ENCODE measurements at regions of chr4 and their contacts with region 1.

Region 1: DNA sequence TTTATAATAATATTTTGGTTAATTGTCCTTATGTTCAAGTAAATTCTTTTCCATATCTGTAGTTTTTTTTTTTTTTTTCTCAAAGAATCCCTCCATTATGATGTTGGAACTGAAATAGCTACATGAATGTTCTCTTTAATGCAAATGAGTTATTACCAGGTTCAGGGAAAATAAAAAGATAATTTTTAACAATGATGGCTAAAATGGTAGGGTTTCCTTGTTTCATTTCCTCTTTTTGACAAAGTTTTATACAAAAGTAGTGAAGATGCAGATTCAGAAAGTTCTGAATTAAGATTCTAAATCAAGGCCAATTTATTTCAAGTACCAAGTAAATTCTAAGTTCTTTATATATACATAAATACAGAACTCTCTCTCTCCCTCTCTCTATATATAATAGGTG is 779.0 kb upstream of the INTU start:
- DNase-seq: no peak

Region 2: DNA sequence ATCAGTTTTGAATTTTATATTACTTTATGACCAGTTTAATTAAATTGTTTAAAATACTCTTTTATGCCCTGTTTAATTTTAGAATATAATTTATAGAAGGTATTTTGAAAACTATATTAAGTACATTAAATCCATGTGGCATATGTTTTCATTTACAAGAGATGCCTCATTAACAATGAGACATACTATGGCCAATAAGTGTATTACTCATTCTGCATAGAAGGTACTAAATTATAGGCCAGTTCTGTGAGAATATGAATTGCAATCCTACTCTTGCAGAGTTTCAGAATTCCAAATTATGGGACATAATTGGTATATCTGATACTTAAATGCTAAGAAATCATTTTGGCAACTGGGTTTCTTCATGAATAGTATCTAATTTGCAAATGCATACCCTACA is 587.8 kb before region 1 on chr4:
- CTCF ChIA-PET with region 1: interaction called, 10 read pairs
- POLR2A ChIA-PET with region 1: no interaction called
- DNase-seq: no peak